Thyroid gland (tissue), 4 donors: ENCODE measurements at regions of chr19 and their contacts with region 1.

Region 1: DNA sequence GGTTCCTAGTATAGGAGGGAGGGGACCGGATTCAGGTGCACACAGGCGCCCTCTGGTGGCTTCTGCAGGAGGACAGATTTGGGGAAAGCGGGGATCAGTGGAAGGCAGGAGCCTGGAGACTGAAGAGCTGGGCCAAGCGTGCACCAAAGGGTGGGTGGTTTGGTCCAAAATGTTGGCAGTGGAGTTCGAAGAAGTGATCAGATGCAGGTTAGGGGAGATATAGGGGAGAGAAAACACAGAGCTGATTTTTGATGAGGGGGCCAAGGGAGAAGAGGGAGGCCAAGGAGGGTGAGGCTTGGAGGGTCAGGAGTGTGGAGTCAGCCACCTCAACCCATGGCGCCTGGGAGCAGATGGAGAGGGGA is 6.8 kb upstream of the CARM1 start:
- DNase-seq: peak; percentile 81 to 87
- H3K4me3 ChIP-seq: no peak overlapping the region
- H3K27ac ChIP-seq: peak overlapping the region in 1 of 3 donors; percentile 65
- H3K4me1 ChIP-seq: peaks cover 0 to 20% of the 10 kb centered on the region in 2 donors
- H3K27me3 ChIP-seq: no peaks in the 10 kb centered on the region
- CTCF ChIP-seq: peak; percentile 64 to 96 (median 81)
- POLR2A ChIP-seq: no peak

Region 2: DNA sequence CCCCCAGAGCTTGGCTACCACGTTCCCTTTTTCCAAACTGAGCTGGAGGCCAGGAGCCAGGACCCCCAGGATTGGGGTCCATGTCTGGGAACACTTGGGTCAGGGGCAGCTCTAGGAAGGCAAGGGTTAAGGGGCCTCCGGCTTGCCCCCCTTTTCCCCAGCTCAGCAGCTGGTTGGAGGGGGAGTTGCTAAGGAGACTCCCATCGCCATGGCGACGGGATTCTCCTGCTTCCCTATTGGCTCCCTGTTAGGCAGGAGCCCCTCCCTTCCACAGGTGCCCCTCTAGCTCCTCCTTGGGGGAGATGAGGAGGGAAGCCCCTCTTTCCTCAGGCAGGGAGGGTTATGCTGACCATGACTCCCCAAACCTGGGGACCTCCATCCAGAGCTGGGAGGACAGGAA is 410.3 kb before region 1 on chr19:
- intact Hi-C with region 1: no loop called
- DNase-seq: no peak
- H3K4me3 ChIP-seq: no peak overlapping the region
- H3K27ac ChIP-seq: no peak overlapping the region
- H3K4me1 ChIP-seq: no peaks in the 10 kb centered on the region
- H3K27me3 ChIP-seq: no peaks in the 10 kb centered on the region
- CTCF ChIP-seq: no peak
- POLR2A ChIP-seq: no peak

Region 3: DNA sequence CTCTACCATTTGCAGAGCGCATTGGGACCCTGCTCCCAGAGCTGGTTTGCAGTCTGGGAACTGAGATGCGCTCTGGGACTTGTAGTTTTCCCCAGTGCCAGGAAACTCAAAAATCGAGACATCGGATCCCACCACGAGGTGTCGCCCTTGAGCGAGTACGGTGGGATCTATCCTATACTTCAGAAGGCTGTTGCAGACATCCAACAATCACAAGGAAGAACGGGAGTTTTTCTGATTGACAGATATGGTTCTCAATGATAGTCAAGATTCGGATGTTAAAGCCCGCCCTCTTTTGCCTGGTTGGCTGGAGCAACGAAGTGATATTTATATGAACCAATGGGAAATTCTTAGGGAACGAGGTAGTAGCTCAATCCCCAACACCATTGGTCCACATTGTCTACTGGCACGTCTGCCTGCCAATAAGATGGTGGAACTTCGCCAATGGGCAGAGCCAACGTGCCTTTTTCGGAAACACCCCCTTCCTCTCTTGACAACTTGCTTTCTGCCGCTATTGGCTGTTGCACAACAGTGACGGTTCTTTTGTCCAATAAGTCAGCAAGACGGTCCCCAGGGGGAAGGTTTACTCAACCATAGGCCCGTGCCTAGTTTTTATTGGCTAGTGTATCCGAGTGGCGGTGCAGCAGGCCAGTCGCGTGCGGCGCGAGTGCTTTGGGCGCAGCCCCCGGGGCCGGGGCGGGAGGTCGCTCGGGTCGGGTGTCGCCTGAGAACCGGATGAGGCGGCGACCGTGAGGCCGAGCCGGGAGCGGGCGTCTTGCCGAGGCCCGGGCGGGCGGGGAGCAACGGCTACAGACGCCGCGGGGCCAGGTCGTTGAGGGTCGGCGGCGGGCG is 146.9 kb before region 1 on chr19 and contains the start of gene DNM2:
- intact Hi-C with region 1: loop called (anchors 5 kb)
- DNase-seq: peak; percentile 98
- H3K4me3 ChIP-seq: peak within 1 kb of the TSS; percentile 88 to 99 (median 95)
- H3K27ac ChIP-seq: peak within 1 kb of the TSS; percentile 78 to 87 (median 79)
- H3K4me1 ChIP-seq: peaks cover 30 to 31% of the 10 kb centered on the region in 2 donors
- H3K27me3 ChIP-seq: no peaks in the 10 kb centered on the region
- CTCF ChIP-seq: peak; percentile 44 to 95 (median 88)
- POLR2A ChIP-seq: peak in 1 of 2 donors; percentile 84
- total RNA-seq, gene DNM2: 95.1 to 155 (median 120) TPM

Region 4: GRCh38 chr19:10769533-10770491 is 94.7 kb before region 1 on chr19:
- intact Hi-C with region 1: loop called (anchors 5 kb)
- DNase-seq: peak in 1 of 2 donors; percentile 33
- H3K4me3 ChIP-seq: no peak overlapping the region
- H3K27ac ChIP-seq: peak overlapping the region in 2 of 3 donors; percentile 51 to 65
- H3K4me1 ChIP-seq: peaks cover 23 to 52% of the 10 kb centered on the region in 2 donors
- H3K27me3 ChIP-seq: no peaks in the 10 kb centered on the region
- CTCF ChIP-seq: peak in 2 of 6 experiments; percentile 10 to 19
- POLR2A ChIP-seq: no peak

Region 5: DNA sequence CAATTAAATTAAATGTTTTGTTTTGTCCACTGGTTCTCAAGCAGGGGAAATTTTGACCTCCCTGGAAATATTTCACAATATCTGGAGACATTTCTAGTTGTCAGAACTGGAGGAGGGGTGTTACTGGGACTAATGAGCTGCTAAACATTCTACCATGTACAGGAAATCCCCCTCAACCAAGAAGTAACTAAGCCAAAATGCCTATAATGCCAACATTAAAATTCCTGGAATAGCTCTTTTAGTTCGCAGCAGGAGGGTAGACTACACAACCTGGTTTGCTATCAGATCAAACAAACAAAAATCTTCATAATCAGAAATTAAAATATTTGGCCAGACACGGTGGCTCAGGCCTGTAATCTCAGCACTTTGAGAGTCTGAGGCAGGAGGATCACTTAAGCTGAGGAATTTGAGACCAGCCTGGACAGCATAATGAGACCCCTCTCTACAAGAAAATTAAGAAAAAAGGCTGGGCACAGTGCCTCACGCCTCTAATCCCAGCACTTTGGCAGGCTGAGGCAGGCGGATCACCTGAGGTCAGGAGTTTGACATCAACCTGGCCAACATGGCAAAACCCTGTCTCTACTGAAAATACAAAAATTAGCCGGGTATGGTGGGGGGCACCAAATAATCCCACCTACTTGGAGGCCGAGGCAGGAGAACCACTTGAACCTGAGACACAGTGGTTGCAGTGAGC is 82.6 kb after region 1 on chr19:
- intact Hi-C with region 1: no loop called
- DNase-seq: no peak
- H3K4me3 ChIP-seq: no peak overlapping the region
- H3K27ac ChIP-seq: no peak overlapping the region
- H3K4me1 ChIP-seq: no peaks in the 10 kb centered on the region
- H3K27me3 ChIP-seq: no peaks in the 10 kb centered on the region
- CTCF ChIP-seq: no peak
- POLR2A ChIP-seq: no peak